Ascending aorta (tissue), 2 donors: ENCODE measurements at regions of chr9 and their contacts with region 1.

Region 1: GRCh38 chr9:15422372-15423230 is at the start of gene SNAPC3:
- DNase-seq: peak; percentile 75 to 95
- H3K4me3 ChIP-seq: peak within 1 kb of the TSS; percentile 85 to 87
- H3K27ac ChIP-seq: peak within 1 kb of the TSS; percentile 84 to 89
- H3K4me1 ChIP-seq: peaks cover 0 to 17% of the 10 kb centered on the region in 2 donors
- H3K27me3 ChIP-seq: no peaks in the 10 kb centered on the region
- CTCF ChIP-seq: peak in 1 of 3 experiments; percentile 4
- total RNA-seq, gene SNAPC3: 8.8 TPM

Region 2: DNA sequence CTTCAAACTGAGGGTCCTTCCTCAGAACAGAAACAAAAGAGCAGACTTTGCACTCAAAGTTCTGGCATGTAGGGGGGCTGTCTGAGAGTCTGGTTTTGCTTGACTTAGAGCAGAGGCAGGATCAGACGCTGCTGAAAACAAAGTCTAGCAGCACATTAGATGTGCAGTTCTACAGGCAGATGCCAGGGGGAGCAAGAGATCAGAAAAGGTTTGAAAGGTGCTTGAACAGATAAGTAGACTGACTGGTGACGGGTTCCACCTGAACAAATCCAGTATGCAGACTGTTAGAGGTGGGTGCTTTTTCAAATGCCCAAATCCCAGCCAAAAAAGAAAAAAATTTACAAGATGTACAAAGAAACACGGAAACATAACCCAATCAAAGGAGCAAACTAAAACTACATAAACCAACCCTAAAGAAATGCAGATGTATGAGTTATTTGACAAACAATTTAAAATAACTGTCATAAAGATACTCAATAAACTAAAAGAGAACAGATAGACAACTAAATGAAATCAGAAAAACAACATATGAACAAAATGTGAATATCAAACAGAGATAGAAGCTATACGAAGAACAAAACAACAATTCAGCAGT is 317.7 kb before region 1 on chr9:
- intact Hi-C with region 1: loop called (anchors 5 kb)
- DNase-seq: no peak
- H3K4me3 ChIP-seq: no peak overlapping the region
- H3K27ac ChIP-seq: no peak overlapping the region
- H3K4me1 ChIP-seq: no peaks in the 10 kb centered on the region
- H3K27me3 ChIP-seq: no peaks in the 10 kb centered on the region
- CTCF ChIP-seq: peak; percentile 63 to 77 (median 72)

Region 3: GRCh38 chr9:15277400-15278090 is 145.1 kb before region 1 on chr9:
- intact Hi-C with region 1: loop called (anchors 2 kb)
- DNase-seq: no peak
- H3K4me3 ChIP-seq: no peak overlapping the region
- H3K27ac ChIP-seq: peak overlapping the region; percentile 12 to 46
- H3K4me1 ChIP-seq: peaks cover 0 to 3% of the 10 kb centered on the region in 2 donors
- H3K27me3 ChIP-seq: no peaks in the 10 kb centered on the region
- CTCF ChIP-seq: peak in 2 of 3 experiments; percentile 18 to 42

Region 4: DNA sequence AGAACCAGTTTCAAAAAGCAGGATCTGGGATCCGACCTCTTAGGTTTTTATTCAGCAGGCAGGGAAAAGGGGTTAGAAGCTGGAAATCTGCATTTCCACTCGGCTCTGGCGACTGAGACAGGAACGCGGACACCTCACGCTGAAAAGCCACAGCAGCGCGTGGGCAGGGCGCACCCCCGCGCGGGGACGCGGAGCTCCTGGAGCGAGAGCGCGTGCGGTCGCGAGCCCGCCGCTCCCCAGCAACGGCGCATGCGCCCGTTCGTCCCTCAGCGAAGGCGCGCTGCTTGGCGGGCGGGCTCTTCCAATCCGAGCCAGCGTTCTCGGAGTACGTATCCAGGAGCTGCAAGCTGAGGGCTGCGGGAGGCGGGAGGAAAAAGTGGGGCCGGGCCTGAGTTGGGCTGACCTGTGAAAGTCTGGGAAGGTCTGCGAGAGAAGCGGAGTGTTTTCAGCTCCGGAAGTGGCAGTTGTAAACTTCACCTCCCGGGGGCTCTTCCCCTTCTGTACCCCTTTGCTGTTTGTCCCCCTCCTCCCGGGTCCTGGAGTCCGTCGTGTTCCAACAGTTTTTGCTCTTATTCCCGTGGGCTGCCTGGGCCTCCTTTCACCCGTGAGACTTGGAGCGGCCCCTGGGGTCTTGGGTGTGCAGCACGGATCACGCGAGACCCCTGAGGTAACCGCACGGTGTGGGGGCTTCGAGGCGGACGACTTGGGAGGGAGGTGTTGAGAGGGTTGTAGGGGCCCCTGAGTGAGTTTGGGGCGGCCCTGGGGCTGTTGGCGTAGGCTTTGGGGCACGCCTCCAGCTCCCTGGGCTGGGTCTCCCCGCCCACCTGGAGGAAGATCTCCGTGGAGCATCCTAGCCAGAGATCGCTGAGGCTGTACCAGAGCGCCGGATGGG is 130.3 kb after region 1 on chr9 and contains the start of gene CCDC171:
- intact Hi-C with region 1: loop called (anchors 2 kb)
- DNase-seq: peak; percentile 72 to 95
- H3K4me3 ChIP-seq: peak within 1 kb of the TSS; percentile 74 to 75
- H3K27ac ChIP-seq: peak within 1 kb of the TSS; percentile 78 to 84
- H3K4me1 ChIP-seq: peaks cover 0 to 5% of the 10 kb centered on the region in 2 donors
- H3K27me3 ChIP-seq: no peaks in the 10 kb centered on the region
- CTCF ChIP-seq: peak in 1 of 3 experiments; percentile 7
- total RNA-seq, gene CCDC171: 1.7 TPM